ENCODE measurements at regions of chr1 and their contacts with region 1.

Region 1: DNA sequence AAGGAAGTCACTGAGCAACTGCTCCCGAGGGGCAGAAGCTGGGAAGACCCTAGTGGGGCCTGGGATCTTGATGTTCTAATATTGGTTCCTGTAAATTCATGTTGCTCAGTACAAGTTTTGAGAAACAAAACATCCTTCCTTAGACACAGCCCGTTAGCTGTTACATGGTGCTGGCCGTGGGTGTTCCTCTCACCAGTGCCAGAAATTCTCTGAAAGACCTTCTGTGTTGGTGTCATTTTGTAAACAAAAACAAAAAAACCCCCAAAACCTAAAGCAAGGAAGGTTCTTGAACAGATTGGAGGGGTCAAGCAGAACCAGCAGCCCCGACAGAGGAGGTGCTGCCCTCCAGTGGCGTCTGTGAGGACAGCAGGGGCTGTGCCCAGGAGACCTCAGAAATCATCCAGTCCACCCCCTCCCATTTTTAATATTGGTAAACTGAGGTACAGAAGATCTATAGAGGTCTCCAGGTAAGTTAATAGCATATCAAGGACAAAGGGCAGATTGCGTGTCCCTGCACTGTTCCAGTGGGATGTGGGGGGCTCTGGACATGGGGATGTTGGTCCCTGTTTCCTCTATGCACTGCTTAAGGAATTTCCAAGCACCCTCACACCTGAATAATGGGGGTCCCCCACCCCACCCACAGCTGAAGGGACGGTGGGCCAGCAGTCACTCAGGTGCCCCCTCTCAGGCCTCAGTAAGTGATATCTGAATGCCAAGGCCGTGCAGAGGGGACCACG is 38.2 kb downstream of the SLC2A7 start:
- DNase-seq: peak; percentile 84
- ATAC-seq: peak; percentile 65
- H3K4me3 Mint-ChIP-seq: peak overlapping the region; percentile 32
- H3K27ac Mint-ChIP-seq: peak overlapping the region; percentile 84
- H3K4me1 Mint-ChIP-seq: peaks cover 62% of the 10 kb centered on the region
- H3K27me3 Mint-ChIP-seq: no peaks in the 10 kb centered on the region

Region 2: DNA sequence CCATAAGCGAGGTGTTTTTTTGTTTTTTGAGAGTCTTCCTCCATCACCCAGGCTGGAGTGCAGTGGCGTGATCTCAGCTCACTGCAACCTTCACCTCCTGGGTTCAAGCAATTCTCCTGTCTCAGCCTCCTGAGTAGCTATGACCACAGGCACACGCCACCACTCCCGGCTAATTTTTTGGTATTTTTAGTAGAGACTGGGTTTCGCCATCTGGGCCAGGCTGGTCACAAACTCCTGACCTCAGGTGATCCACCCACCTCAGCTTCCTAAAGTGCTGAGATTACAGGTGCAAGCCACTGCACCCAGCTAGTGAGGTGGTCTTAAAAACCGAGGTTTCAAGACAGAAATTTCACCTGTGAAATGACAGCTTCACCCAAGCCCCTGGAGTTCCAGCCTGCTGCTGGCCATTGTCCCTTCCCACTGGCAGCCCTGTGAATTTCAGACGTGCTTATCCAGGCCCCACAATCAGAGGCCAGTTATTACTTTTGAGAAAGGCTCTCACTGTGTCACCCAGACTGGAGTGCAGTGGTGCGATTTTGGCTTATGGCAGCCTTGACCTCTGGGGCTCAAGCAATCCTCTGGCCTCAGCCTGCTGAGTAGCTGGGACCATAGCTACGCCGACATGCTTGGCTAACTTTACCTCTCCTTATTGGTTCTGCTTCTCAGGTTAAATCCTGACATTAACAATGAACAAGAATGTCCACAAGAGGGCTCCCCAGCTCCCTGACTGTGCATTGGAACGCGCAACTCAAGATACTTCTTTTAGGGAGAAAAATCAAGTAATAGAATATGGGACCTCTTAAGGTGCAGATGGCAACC is 129.0 kb before region 1 on chr1:
- CTCF ChIA-PET with region 1: interaction called, 13 read pairs
- DNase-seq: peak; percentile 68
- ATAC-seq: peak; percentile 48
- H3K4me3 Mint-ChIP-seq: peak overlapping the region; percentile 32
- H3K27ac Mint-ChIP-seq: peak overlapping the region; percentile 90
- H3K4me1 Mint-ChIP-seq: peaks cover 60% of the 10 kb centered on the region
- H3K27me3 Mint-ChIP-seq: no peaks in the 10 kb centered on the region

Region 3: GRCh38 chr1:8941906-8942305 is 46.1 kb before region 1 on chr1:
- CTCF ChIA-PET with region 1: interaction called, 16 read pairs
- DNase-seq: no peak
- ATAC-seq: no peak
- H3K4me3 Mint-ChIP-seq: peak overlapping the region; percentile 33
- H3K27ac Mint-ChIP-seq: peak overlapping the region; percentile 74
- H3K4me1 Mint-ChIP-seq: peaks cover 88% of the 10 kb centered on the region
- H3K27me3 Mint-ChIP-seq: no peaks in the 10 kb centered on the region

Region 4: GRCh38 chr1:8962812-8963530 is 25.1 kb before region 1 on chr1:
- CTCF ChIA-PET with region 1: interaction called, 93 read pairs
- DNase-seq: peak; percentile 80
- ATAC-seq: peak; percentile 75
- H3K4me3 Mint-ChIP-seq: peak overlapping the region; percentile 45
- H3K27ac Mint-ChIP-seq: peak overlapping the region; percentile 80
- H3K4me1 Mint-ChIP-seq: peaks cover 79% of the 10 kb centered on the region
- H3K27me3 Mint-ChIP-seq: no peaks in the 10 kb centered on the region

Region 5: GRCh38 chr1:8976896-8977450 is 11.1 kb before region 1 on chr1:
- CTCF ChIA-PET with region 1: interaction called, 10 read pairs
- DNase-seq: no peak
- ATAC-seq: no peak
- H3K4me3 Mint-ChIP-seq: no peak overlapping the region
- H3K27ac Mint-ChIP-seq: no peak overlapping the region
- H3K4me1 Mint-ChIP-seq: peaks cover 7% of the 10 kb centered on the region
- H3K27me3 Mint-ChIP-seq: peaks cover 3% of the 10 kb centered on the region

Region 6: GRCh38 chr1:9014475-9015375 is 26.7 kb after region 1 on chr1:
- CTCF ChIA-PET with region 1: no interaction called
- DNase-seq: no peak
- ATAC-seq: no peak
- H3K4me3 Mint-ChIP-seq: no peak overlapping the region
- H3K27ac Mint-ChIP-seq: no peak overlapping the region
- H3K4me1 Mint-ChIP-seq: peaks cover 6% of the 10 kb centered on the region
- H3K27me3 Mint-ChIP-seq: peaks cover 22% of the 10 kb centered on the region

Region 7: DNA sequence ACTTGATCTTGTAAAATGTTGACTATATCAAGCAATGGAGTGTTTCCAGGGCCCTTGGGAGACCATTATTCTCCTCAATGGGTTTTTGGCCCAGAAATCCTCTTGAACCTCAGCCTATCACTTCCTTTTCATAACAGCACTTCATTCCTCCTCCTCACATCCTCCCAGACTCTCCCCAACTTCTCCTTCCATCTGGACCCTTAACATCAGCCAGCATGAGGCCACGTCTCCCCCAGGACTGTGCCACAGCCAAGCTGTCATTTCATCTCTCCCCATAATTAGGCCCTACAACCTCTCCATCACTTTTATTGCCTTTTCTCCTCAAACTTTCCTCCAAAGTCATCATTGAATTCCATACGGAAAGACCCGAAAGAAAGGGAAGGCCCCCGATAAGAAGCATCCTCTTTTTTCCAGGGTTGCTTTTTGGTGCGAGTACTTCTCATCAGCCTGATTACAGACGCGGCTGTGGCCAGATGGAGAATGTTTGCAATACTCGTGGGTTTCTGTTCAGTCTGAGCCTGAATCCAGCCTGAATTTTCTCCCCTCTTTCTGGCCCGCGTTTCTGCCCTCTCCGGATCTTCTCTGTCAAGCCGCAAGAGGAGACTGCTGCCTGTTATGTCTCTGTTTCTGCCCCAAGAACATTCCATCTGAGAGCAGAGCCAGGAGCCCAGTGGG is 498.6 kb after region 1 on chr1:
- CTCF ChIA-PET with region 1: no interaction called
- DNase-seq: no peak
- ATAC-seq: no peak
- H3K4me3 Mint-ChIP-seq: no peak overlapping the region
- H3K27ac Mint-ChIP-seq: no peak overlapping the region
- H3K4me1 Mint-ChIP-seq: peaks cover 3% of the 10 kb centered on the region
- H3K27me3 Mint-ChIP-seq: peaks cover 24% of the 10 kb centered on the region

Measured in activated CD8-positive, alpha-beta memory T cell treated with anti-CD3 and anti-CD28 coated beads, Interleukin-2, amount 10 ng/mL, durations not matched to agents 7 days and 5 days (primary cell).